Aorta (tissue), 5 donors: ENCODE measurements at regions of chrX and their contacts with region 1.

Region 1: DNA sequence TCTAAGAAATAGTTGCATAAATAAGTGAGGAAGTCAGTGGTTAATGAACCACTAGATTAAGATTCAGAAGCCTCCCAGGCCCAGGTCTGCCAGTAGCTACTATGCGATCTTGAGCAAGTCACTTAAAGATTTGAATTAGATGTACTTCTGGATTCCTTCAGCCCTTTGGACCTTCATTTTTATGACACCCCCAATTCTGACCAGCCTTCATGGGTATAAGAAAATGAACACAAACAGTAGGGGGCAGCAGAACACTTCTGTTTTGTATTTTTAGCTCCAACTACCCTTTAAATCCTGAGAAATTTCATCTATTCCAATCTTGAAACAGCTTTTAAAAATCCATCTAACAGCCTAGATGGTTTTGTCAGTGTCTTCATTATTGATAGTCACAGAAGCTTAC is 19.0 kb downstream of the TMEM47 start:
- DNase-seq: no peak
- ATAC-seq: no peak
- H3K4me3 ChIP-seq: no peak overlapping the region
- H3K27ac ChIP-seq: no peak overlapping the region
- H3K4me1 ChIP-seq: peaks cover 3% of the 10 kb centered on the region in 2 donors
- H3K27me3 ChIP-seq: no peaks in the 10 kb centered on the region

Region 2: DNA sequence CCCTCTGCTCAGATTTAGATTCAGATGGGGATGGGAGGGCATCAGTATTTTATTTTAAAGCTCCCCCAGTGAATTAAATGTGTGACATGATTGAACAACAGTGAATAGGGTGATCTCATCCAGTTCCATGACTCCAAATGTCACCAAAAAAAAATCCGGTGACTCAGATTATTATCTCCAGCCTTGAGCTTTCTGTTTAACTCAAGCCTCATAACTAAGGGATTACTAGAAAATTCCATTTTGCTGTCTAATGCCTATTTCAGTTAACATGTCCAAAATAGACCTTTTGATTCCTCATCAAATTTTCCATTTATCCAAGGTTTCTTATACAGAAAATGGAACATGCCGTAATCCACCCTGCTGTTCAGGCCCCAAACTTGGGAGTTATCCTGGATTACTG is 140.8 kb after region 1 on chrX:
- intact Hi-C with region 1: loop called in 1 of 2 experiments (anchors 10 kb)
- DNase-seq: no peak
- ATAC-seq: peak; percentile 50
- H3K4me3 ChIP-seq: no peak overlapping the region
- H3K27ac ChIP-seq: peak overlapping the region in 1 of 2 donors; percentile 57
- H3K4me1 ChIP-seq: no peaks in the 10 kb centered on the region
- H3K27me3 ChIP-seq: no peaks in the 10 kb centered on the region

Region 3: DNA sequence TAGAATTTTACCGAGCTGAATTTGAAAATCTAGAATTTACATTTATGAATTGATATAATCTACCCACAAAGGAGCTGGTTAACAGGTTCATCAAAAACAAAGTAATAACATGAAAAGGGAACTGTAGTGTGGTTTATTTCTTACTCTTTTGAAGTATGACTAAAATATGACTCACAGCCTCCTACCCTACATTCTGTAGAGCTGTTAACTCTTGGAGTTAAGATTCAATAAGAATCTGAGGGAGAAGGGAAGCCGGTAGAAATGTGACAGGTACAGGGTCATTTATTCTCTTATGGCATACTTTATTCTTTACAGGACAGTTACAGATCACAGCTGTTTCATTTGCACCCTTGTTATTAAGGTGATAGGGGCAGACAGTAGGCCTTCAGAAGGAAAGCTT is 172.2 kb after region 1 on chrX:
- intact Hi-C with region 1: no loop called
- DNase-seq: no peak
- ATAC-seq: no peak
- H3K4me3 ChIP-seq: no peak overlapping the region
- H3K27ac ChIP-seq: no peak overlapping the region
- H3K4me1 ChIP-seq: peaks cover 0 to 2% of the 10 kb centered on the region in 2 donors
- H3K27me3 ChIP-seq: no peaks in the 10 kb centered on the region

Region 4: GRCh38 chrX:35445912-35446311 is 807.8 kb after region 1 on chrX:
- intact Hi-C with region 1: loop called in 1 of 2 experiments (anchors 10 kb)
- DNase-seq: no peak
- ATAC-seq: no peak
- H3K4me3 ChIP-seq: no peak overlapping the region
- H3K27ac ChIP-seq: no peak overlapping the region
- H3K4me1 ChIP-seq: no peaks in the 10 kb centered on the region
- H3K27me3 ChIP-seq: no peaks in the 10 kb centered on the region